ENCODE measurements at regions of chr18 and their contacts with region 1.

Region 1: GRCh38 chr18:68735483-68736343 is 20.8 kb upstream of the TMX3 start:
- DNase-seq: no peak
- H3K4me3 Mint-ChIP-seq: no peak overlapping the region
- H3K27ac Mint-ChIP-seq: no peak overlapping the region
- H3K4me1 Mint-ChIP-seq: no peaks in the 10 kb centered on the region
- H3K27me3 Mint-ChIP-seq: no peaks in the 10 kb centered on the region

Region 2: DNA sequence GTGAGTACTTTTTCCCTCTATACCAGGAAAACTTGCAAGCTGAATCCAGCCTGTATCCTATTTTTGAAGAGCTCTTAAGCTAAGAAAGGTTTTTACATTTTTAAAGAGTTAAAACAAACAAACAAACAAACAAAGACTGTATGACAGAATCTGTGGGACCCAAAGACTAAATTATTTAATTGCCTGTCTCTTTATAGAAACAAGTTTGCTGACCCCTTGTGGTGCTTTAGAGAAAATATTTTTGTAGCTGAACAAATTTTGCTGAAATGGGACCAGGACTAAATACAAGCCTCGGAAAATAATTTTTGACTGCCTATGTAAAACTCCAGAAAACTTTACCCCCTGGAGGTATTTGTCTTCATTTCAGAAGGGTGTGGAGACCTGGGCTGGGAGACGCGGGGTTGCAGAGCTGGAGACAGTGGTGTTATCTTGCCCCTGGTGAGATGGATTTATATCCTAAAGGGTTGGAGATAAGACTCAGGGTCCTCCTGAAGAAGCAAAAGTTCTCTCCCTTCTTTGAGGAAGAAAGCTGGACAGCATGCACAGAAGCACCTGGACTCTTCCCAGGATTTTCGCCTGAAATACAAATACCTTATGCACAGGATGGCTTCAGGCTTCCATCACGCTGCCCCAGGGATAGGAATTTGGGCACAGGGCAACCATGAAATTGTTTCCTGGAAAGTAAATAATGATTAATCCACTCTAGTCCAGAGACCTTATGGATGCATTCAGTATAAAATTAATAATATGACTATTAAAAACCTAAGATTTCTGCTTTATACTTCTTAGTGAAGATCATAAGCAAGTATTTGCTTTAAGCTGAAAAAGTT is 75.1 kb before region 1 on chr18:
- intact Hi-C with region 1: loop called (anchors 1 kb)
- DNase-seq: no peak
- H3K4me3 Mint-ChIP-seq: no peak overlapping the region
- H3K27ac Mint-ChIP-seq: no peak overlapping the region
- H3K4me1 Mint-ChIP-seq: no peaks in the 10 kb centered on the region
- H3K27me3 Mint-ChIP-seq: peaks cover 2% of the 10 kb centered on the region

Region 3: GRCh38 chr18:68676913-68677312 is 58.8 kb before region 1 on chr18:
- intact Hi-C with region 1: loop called (anchors 5 kb)
- DNase-seq: no peak
- H3K4me3 Mint-ChIP-seq: no peak overlapping the region
- H3K27ac Mint-ChIP-seq: no peak overlapping the region
- H3K4me1 Mint-ChIP-seq: no peaks in the 10 kb centered on the region
- H3K27me3 Mint-ChIP-seq: no peaks in the 10 kb centered on the region

Region 4: GRCh38 chr18:68714609-68715496 is 20.9 kb before region 1 on chr18 and contains the start of gene TMX3:
- intact Hi-C with region 1: loop called (anchors 2 kb)
- DNase-seq: peak; percentile 90
- H3K4me3 Mint-ChIP-seq: peak within 1 kb of the TSS; percentile 92
- H3K27ac Mint-ChIP-seq: peak within 1 kb of the TSS; percentile 87
- H3K4me1 Mint-ChIP-seq: peaks cover 51% of the 10 kb centered on the region
- H3K27me3 Mint-ChIP-seq: no peaks in the 10 kb centered on the region
- total RNA-seq, gene TMX3: 63.7 and 65.0 TPM in 2 replicates